ENCODE measurements at regions of chr6 and their contacts with region 1.

Region 1: GRCh38 chr6:16761471-16762267 is 409 bp upstream of the ATXN1 start:
- DNase-seq: peak; percentile 87 to 96 (median 92)
- ATAC-seq: peak; percentile 55
- H3K4me3 ChIP-seq: peak overlapping the region; percentile 70
- H3K27ac ChIP-seq: peak overlapping the region; percentile 98 to 99
- H3K4me1 ChIP-seq: peaks cover 8 to 72% of the 10 kb centered on the region in 2 donors
- H3K27me3 ChIP-seq: no peaks in the 10 kb centered on the region
- CTCF ChIP-seq: peak in 1 of 2 donors; percentile 34

Region 2: DNA sequence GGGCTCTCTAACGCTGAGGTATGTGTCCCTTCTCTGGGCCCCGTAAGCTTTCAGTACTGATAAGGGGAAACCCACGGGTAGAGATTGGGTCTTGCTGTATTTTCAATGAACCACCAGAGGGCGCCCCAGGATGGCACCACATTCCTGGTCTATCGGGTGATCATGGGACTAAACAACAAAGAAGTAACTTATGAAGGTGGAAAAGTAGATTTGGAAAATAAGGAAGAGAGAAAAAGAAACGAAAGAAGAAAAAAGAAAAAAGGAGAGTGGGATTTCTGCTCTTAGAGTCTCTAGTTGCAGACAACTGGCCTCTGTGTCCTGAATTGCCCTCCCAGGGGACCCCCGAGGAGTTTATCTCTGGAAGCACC is 429.5 kb before region 1 on chr6:
- intact Hi-C with region 1: loop called (anchors 5 to 10 kb)
- DNase-seq: peak in 3 of 4 donors; percentile 67 to 83 (median 78)
- ATAC-seq: peak; percentile 93
- H3K4me3 ChIP-seq: no peak overlapping the region
- H3K27ac ChIP-seq: no peak overlapping the region
- H3K4me1 ChIP-seq: peaks cover 4 to 44% of the 10 kb centered on the region in 2 donors
- H3K27me3 ChIP-seq: no peaks in the 10 kb centered on the region
- CTCF ChIP-seq: peak; percentile 81 to 95

Region 3: DNA sequence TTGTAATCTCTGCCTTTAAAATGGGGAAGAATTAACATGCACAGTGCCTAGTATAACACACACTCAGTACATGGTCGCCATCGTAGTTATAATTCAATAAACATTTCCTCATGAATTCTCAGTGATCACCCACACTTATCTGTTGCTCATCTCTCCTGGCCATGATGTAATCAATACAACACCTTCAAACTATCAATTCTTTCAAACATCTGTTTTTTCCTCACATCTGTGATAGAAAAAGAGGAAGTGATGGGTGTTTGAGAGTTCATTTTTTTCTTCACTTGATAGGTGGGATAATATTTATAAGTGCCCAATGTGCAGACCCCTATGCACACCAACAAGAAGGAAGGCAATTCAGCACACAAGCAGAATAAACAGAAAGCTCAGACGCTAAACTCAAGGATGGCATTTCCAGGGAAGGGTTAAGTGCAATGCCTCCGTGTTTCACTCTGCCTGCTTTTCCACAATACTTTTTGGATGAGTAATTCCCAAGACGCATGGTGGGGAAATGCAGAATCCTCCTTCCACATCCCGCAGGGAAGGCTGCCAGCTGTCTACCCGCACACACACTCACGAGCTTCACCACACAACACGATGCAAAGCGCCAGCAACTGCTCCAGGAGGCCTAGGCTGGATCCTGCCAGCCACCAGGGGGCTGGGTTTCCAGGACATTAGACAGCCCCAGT is 422.9 kb before region 1 on chr6:
- intact Hi-C with region 1: loop called (anchors 5 to 10 kb)
- DNase-seq: peak in 2 of 4 donors; percentile 50 to 79
- ATAC-seq: peak; percentile 53
- H3K4me3 ChIP-seq: no peak overlapping the region
- H3K27ac ChIP-seq: peak overlapping the region in 1 of 2 donors; percentile 20
- H3K4me1 ChIP-seq: peaks cover 4 to 50% of the 10 kb centered on the region in 2 donors
- H3K27me3 ChIP-seq: no peaks in the 10 kb centered on the region
- CTCF ChIP-seq: peak in 1 of 2 donors; percentile 47

Region 4: DNA sequence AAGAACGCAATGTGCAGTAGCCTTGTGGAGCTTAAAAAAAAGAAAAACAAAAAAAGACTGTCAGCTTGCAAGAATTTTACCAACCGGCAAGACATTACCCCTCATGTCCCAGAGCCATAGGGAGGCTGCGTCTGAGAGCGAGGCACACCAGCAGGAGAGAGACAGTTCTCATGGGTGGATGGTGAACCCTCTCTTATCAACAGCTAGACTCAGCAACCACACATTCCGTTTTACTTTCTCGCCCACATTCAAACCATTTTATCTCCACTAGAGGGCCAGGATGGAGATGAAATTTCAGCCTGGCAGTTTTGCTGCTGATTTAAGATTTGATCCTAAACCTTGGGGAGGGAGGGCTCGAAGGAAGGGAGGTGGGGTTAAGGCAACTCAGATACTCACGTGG is 247.4 kb before region 1 on chr6:
- intact Hi-C with region 1: loop called in 1 of 2 experiments (anchors 5 kb)
- DNase-seq: peak in 1 of 4 donors; percentile 32
- ATAC-seq: peak; percentile 21
- H3K4me3 ChIP-seq: no peak overlapping the region
- H3K27ac ChIP-seq: no peak overlapping the region
- H3K4me1 ChIP-seq: peaks cover 3 to 48% of the 10 kb centered on the region in 2 donors
- H3K27me3 ChIP-seq: no peaks in the 10 kb centered on the region
- CTCF ChIP-seq: peak; percentile 24 to 32

Region 5: GRCh38 chr6:16657768-16658167 is 103.9 kb before region 1 on chr6:
- intact Hi-C with region 1: no loop called
- DNase-seq: no peak
- ATAC-seq: no peak
- H3K4me3 ChIP-seq: no peak overlapping the region
- H3K27ac ChIP-seq: no peak overlapping the region
- H3K4me1 ChIP-seq: peaks cover 0 to 12% of the 10 kb centered on the region in 2 donors
- H3K27me3 ChIP-seq: no peaks in the 10 kb centered on the region
- CTCF ChIP-seq: no peak

Region 6: GRCh38 chr6:17086469-17086868 is 324.8 kb after region 1 on chr6:
- intact Hi-C with region 1: loop called in 1 of 2 experiments (anchors 10 kb)
- DNase-seq: peak in 3 of 4 donors; percentile 34 to 82 (median 70)
- ATAC-seq: peak; percentile 93
- H3K4me3 ChIP-seq: no peak overlapping the region
- H3K27ac ChIP-seq: no peak overlapping the region
- H3K4me1 ChIP-seq: no peaks in the 10 kb centered on the region
- H3K27me3 ChIP-seq: peaks cover 0 to 6% of the 10 kb centered on the region in 2 donors
- CTCF ChIP-seq: peak; percentile 56 to 62